ENCODE measurements at regions of chr10 and their contacts with region 1.

Region 1: GRCh38 chr10:99845837-99846382 is 63.5 kb downstream of the ABCC2 start:
- DNase-seq: peak; percentile 67
- H3K4me3 ChIP-seq: 0 out of 2 replicates have a peak overlapping the region, but pooled peaks have one; percentile 0
- H3K27me3 ChIP-seq: no peaks in the 10 kb centered on the region
- CTCF ChIP-seq: peak; percentile 87

Region 2: DNA sequence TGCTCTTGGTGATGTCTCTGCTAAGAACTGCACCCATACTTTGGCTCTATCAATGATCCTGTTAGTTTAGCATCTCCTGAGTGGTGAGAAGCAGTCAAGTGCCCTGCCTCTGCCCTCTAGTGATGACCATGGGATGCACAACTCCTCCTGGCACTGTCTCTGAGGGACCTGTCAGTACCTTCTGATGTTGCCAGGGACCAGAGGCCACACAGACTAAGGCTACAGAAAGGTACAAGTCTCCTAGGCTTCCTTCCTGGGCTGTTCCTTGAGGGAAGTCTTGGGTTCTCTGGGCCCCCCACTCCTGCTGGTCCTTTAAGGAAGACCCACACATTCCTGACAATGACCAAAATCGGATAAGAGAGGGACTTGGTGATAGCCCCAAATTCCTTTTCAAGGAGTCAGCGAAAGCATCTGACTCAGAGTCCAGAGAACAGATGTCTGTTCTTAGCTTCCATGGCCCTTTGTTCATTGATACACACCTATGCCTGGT is 297.8 kb before region 1 on chr10:
- CTCF ChIA-PET with region 1: no interaction called
- POLR2A ChIA-PET with region 1: no interaction called
- DNase-seq: no peak
- H3K4me3 ChIP-seq: no peak overlapping the region
- H3K27me3 ChIP-seq: peaks cover 5% of the 10 kb centered on the region
- CTCF ChIP-seq: peak; percentile 36; the same call in 1 of the 2 replicates

Region 3: GRCh38 chr10:99565166-99565565 is 280.7 kb before region 1 on chr10:
- CTCF ChIA-PET with region 1: no interaction called
- POLR2A ChIA-PET with region 1: no interaction called
- DNase-seq: no peak
- H3K4me3 ChIP-seq: no peak overlapping the region
- H3K27me3 ChIP-seq: peaks cover 11% of the 10 kb centered on the region
- CTCF ChIP-seq: no peak

Region 4: DNA sequence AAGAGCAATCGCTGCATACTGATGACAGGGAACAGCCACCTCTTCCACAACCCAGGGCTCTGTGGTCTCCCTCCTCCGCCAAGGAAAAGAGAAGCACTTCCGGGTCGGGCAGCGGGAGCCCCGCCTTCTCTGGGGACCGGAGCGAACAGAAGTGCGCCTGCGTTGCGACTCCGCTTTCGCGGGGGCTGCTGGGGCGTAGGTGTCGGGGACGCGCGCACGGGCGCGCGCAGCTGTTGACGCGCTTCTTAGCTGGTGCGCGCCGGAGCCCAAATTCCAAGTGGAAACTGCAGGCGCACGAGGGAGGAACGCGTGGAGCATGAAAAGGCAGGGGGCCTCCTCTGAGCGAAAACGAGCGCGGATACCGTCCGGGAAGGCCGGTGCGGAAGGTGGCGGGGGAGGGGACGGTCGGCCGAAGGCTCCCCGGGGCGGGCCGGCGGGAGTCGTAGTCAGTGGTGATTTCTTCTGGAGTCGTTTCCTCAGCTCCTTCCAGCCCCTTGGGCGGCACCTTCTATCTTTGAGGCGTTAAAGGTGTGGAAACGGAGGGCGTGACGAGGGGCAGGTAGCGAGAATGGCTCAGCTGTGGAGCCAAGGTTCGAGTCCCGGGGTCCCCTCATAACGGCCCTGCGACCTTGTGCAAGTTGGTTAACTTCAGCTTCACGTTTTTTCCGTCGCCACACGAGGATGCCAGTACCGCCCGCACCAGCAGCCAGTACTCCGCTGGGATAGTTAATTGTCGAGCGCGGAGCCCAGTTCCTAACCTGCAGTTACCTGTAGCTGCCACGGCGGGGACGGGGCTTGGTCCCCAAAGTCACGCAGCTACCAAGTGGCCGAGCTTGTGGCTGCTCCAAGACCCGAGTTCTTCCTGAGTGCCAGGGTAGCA is 113.6 kb before region 1 on chr10 and contains the starts of genes COX15 and CUTC:
- CTCF ChIA-PET with region 1: interaction called, 23 read pairs
- POLR2A ChIA-PET with region 1: no interaction called
- DNase-seq: peak; percentile 80
- H3K4me3 ChIP-seq: peak within 1 kb of the TSS; percentile 88
- H3K27me3 ChIP-seq: no peaks in the 10 kb centered on the region
- CTCF ChIP-seq: peak; percentile 45
- polyA plus RNA-seq, gene COX15: 16.3 and 19.3 TPM in 2 replicates
- polyA plus RNA-seq, gene CUTC: 10.7 and 19.3 TPM in 2 replicates

Region 5: DNA sequence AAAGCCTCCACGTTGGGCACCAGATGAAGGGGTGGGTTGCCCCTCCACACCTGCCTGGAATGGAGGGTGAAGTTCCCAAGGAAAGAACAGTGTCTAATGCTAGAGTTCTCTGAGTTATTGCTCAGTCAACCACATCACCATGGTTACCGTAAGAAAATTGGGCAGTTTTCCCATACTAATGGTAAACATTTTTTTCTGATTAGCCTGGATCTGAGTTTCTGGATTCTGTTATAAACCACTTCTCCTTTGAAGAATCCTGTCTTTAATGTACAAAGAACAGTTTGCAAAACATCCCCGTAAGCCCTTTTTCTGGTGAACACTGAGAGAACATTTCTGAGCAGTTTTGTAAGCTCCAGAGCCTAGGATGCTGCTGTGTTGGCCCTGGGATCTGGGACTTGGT is 18.0 kb before region 1 on chr10:
- CTCF ChIA-PET with region 1: interaction called, 25 read pairs
- POLR2A ChIA-PET with region 1: no interaction called
- DNase-seq: peak; percentile 8
- H3K4me3 ChIP-seq: no peak overlapping the region
- H3K27me3 ChIP-seq: no peaks in the 10 kb centered on the region
- CTCF ChIP-seq: no peak

Region 6: GRCh38 chr10:99860466-99860865 is 14.6 kb after region 1 on chr10:
- CTCF ChIA-PET with region 1: interaction called, 21 read pairs
- POLR2A ChIA-PET with region 1: no interaction called
- DNase-seq: no peak
- H3K4me3 ChIP-seq: no peak overlapping the region
- H3K27me3 ChIP-seq: no peaks in the 10 kb centered on the region
- CTCF ChIP-seq: no peak

Region 7: GRCh38 chr10:99976886-99977665 is 131.2 kb after region 1 on chr10:
- CTCF ChIA-PET with region 1: interaction called, 11 read pairs
- POLR2A ChIA-PET with region 1: no interaction called
- DNase-seq: peak; percentile 89
- H3K4me3 ChIP-seq: no peak overlapping the region
- H3K27me3 ChIP-seq: no peaks in the 10 kb centered on the region
- CTCF ChIP-seq: no peak

Measured in BJ (cell line).